ENCODE measurements at regions of chr1 and their contacts with region 1.

Region 1: GRCh38 chr1:181088079-181089016 is at the start of gene IER5:
- DNase-seq: peak; percentile 93 to 95 (median 95)
- H3K4me3 ChIP-seq: peak within 1 kb of the TSS; percentile 68 to 69
- H3K4me3 Mint-ChIP-seq: peak within 1 kb of the TSS; percentile 98 to 100 (median 99)
- H3K27ac ChIP-seq: peak within 1 kb of the TSS; percentile 100
- H3K27ac Mint-ChIP-seq: peak within 1 kb of the TSS; percentile 96 to 99 (median 99)
- H3K4me1 ChIP-seq: peaks cover 40% of the 10 kb centered on the region
- H3K4me1 Mint-ChIP-seq: peaks cover 29 to 63% (median 40%) of the 10 kb centered on the region in 4 donors
- H3K27me3 ChIP-seq: no peaks in the 10 kb centered on the region
- H3K27me3 Mint-ChIP-seq: no peaks in the 10 kb centered on the region
- total RNA-seq, gene IER5: 28.0 to 29.3 TPM

Region 2: DNA sequence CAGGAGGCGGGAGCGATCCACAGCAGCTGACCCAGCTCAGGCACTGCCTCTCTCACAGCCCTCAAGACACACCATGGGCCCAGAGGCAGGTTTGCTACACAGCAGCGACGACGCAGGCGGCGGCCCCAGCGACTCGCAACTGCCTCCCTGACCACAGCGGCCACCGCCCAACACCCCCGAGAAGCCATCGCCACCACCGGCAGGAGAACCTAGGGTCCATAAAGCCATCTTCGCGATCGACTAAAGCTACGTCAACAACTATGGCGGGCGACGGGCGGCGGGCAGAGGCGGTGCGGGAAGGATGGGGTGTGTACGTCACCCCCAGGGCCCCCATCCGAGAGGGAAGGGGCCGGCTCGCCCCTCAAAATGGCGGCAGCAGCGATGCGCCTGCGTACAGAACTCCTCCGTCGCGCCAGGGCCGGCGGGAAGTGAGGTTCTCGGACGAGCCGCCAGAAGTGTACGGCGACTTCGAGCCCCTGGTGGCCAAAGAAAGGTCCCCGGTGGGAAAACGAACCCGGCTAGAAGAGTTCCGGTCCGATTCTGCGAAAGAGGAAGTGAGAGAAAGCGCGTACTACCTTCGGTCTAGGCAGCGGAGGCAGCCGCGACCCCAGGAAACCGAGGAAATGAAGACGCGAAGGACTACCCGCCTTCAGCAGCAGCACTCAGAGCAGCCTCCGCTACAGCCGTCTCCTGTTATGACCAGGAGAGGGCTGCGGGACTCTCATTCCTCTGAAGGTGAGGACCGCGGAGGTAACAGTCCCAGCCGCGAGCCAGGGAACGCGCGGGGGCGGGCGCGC is 1205.9 kb before region 1 on chr1 and contains the start of gene TOR1AIP1:
- CTCF ChIA-PET with region 1: no interaction called
- POLR2A ChIA-PET with region 1: interaction called, 3 read pairs
- intact Hi-C with region 1: loop called (anchors 5 kb)
- DNase-seq: peak; percentile 98 to 99 (median 98)
- H3K4me3 ChIP-seq: peak within 1 kb of the TSS; percentile 80 to 94
- H3K4me3 Mint-ChIP-seq: peak within 1 kb of the TSS; percentile 94 to 99 (median 96)
- H3K27ac ChIP-seq: peak within 1 kb of the TSS; percentile 99
- H3K27ac Mint-ChIP-seq: peak within 1 kb of the TSS; percentile 99 to 100 (median 100)
- H3K4me1 ChIP-seq: peaks cover 53% of the 10 kb centered on the region
- H3K4me1 Mint-ChIP-seq: peaks cover 31 to 77% (median 53%) of the 10 kb centered on the region in 4 donors
- H3K27me3 ChIP-seq: no peaks in the 10 kb centered on the region
- H3K27me3 Mint-ChIP-seq: no peaks in the 10 kb centered on the region
- total RNA-seq, gene TOR1AIP1: 53.8 to 61.0 TPM

Region 3: DNA sequence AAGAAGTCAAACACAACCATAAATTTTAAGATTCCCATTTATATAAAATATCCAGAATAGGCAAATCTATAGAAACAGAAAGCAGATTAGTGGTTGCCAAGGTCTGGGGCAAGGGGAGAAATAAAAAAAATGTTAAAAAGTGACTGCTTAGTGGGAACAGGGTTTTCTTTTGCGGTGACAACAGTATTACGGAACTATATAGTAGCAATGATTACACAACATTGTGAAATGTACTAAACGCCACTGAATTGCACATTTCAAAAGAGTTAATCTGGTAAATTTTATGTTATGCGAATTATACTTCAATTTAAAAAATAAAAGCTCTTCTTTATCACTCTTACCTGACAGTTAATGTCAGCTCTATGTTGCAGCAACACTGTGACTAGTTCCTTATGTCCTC is 691.2 kb before region 1 on chr1:
- CTCF ChIA-PET with region 1: no interaction called
- POLR2A ChIA-PET with region 1: no interaction called
- intact Hi-C with region 1: no loop called
- DNase-seq: no peak
- H3K4me3 ChIP-seq: no peak overlapping the region
- H3K4me3 Mint-ChIP-seq: no peak overlapping the region
- H3K27ac ChIP-seq: no peak overlapping the region
- H3K27ac Mint-ChIP-seq: no peak overlapping the region
- H3K4me1 ChIP-seq: no peaks in the 10 kb centered on the region
- H3K4me1 Mint-ChIP-seq: peaks cover 0 to 11% (median 5%) of the 10 kb centered on the region in 4 donors
- H3K27me3 ChIP-seq: no peaks in the 10 kb centered on the region
- H3K27me3 Mint-ChIP-seq: no peaks in the 10 kb centered on the region

Region 4: GRCh38 chr1:180881806-180882509 is 206.4 kb before region 1 on chr1:
- CTCF ChIA-PET with region 1: no interaction called
- POLR2A ChIA-PET with region 1: no interaction called
- intact Hi-C with region 1: loop called (anchors 1 kb)
- DNase-seq: peak in 1 of 5 donors; percentile 4
- H3K4me3 ChIP-seq: no peak overlapping the region
- H3K4me3 Mint-ChIP-seq: no peak overlapping the region
- H3K27ac ChIP-seq: no peak overlapping the region
- H3K27ac Mint-ChIP-seq: no peak overlapping the region
- H3K4me1 ChIP-seq: no peaks in the 10 kb centered on the region
- H3K4me1 Mint-ChIP-seq: no peaks in the 10 kb centered on the region
- H3K27me3 ChIP-seq: no peaks in the 10 kb centered on the region
- H3K27me3 Mint-ChIP-seq: no peaks in the 10 kb centered on the region

Region 5: DNA sequence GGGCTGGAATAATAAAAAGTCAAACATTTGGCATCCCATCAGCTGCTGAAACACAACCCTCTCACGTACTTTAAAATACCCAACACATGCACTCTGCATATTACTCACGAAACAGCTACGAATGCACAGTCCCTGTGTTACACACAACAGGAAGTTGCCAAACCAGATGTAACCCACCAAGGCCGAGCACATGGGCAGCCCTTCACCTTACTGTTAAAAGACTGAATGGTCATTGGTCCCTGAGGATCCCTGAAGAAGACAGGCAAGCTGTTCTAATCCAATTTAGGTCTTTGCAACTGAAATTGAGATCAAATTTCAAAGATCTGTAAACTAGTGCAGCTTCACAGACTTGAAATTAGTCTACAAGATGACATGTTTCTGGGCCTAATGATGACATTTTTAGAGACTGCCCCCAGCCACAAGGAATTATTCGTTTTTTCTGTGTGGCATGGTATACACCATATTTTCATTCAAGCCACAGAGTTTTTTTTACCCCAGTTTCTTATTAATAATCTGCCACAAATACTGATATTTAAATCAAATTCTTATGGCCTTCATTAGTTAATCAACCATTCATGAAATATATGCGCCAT is 25.4 kb before region 1 on chr1:
- CTCF ChIA-PET with region 1: interaction called, 9 read pairs
- POLR2A ChIA-PET with region 1: interaction called, 24 read pairs
- intact Hi-C with region 1: no loop called
- DNase-seq: peak in 4 of 5 donors; percentile 13 to 27 (median 19)
- H3K4me3 ChIP-seq: peak overlapping the region in 1 of 2 donors; percentile 33
- H3K4me3 Mint-ChIP-seq: peak overlapping the region; percentile 70 to 91 (median 76)
- H3K27ac ChIP-seq: peak overlapping the region; percentile 39
- H3K27ac Mint-ChIP-seq: peak overlapping the region; percentile 27 to 95 (median 87)
- H3K4me1 ChIP-seq: peaks cover 19% of the 10 kb centered on the region
- H3K4me1 Mint-ChIP-seq: peaks cover 18 to 24% (median 21%) of the 10 kb centered on the region in 4 donors
- H3K27me3 ChIP-seq: no peaks in the 10 kb centered on the region
- H3K27me3 Mint-ChIP-seq: no peaks in the 10 kb centered on the region

Region 6: DNA sequence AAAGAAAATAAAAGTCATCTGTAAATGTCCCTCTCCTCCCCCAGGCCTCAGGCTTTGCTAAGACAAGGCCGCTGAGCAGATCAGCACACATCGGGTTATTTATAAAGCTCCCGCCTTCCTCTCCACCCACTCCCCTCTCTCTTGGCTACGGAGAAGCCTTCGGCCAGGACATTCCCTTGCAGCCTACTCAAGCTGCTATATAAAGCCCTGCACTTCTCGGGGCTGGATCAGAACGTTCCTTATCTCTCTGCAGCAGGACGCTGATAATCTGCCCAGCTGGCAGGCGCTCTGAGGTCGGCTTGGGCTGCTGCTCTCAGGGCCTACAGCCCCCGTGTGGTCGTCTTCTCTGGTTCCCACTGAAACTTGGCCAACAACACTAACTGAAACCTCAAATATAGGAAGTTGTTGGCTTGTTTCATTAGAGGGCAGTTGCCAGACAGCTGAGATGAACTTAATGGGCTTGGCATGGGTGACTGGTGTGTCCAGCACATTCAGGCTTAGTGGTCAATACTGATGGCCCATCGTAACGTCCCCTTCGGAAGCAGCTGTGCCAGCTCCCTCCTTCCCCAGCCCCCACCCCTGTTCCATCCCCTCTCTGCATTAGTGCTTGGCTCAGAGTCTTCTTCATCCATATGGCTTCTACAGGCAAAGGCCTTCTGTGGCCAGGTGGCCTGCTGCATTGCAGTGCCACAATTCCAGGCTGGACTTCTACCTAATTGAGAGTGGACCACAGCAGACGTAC is 64.7 kb after region 1 on chr1:
- CTCF ChIA-PET with region 1: interaction called, 311 read pairs
- POLR2A ChIA-PET with region 1: interaction called, 81 read pairs
- intact Hi-C with region 1: no loop called
- DNase-seq: no peak
- H3K4me3 ChIP-seq: no peak overlapping the region
- H3K4me3 Mint-ChIP-seq: no peak overlapping the region
- H3K27ac ChIP-seq: no peak overlapping the region
- H3K27ac Mint-ChIP-seq: peak overlapping the region in 2 of 7 donors; percentile 23 to 62
- H3K4me1 ChIP-seq: peaks cover 56% of the 10 kb centered on the region
- H3K4me1 Mint-ChIP-seq: peaks cover 37 to 61% (median 49%) of the 10 kb centered on the region in 4 donors
- H3K27me3 ChIP-seq: no peaks in the 10 kb centered on the region
- H3K27me3 Mint-ChIP-seq: no peaks in the 10 kb centered on the region

Region 7: GRCh38 chr1:181296180-181296579 is 207.8 kb after region 1 on chr1:
- CTCF ChIA-PET with region 1: no interaction called
- POLR2A ChIA-PET with region 1: no interaction called
- intact Hi-C with region 1: no loop called
- DNase-seq: no peak
- H3K4me3 ChIP-seq: no peak overlapping the region
- H3K4me3 Mint-ChIP-seq: no peak overlapping the region
- H3K27ac ChIP-seq: no peak overlapping the region
- H3K27ac Mint-ChIP-seq: no peak overlapping the region
- H3K4me1 ChIP-seq: no peaks in the 10 kb centered on the region
- H3K4me1 Mint-ChIP-seq: no peaks in the 10 kb centered on the region
- H3K27me3 ChIP-seq: no peaks in the 10 kb centered on the region
- H3K27me3 Mint-ChIP-seq: peaks cover 0 to 8% of the 10 kb centered on the region in 2 donors

Region 8: DNA sequence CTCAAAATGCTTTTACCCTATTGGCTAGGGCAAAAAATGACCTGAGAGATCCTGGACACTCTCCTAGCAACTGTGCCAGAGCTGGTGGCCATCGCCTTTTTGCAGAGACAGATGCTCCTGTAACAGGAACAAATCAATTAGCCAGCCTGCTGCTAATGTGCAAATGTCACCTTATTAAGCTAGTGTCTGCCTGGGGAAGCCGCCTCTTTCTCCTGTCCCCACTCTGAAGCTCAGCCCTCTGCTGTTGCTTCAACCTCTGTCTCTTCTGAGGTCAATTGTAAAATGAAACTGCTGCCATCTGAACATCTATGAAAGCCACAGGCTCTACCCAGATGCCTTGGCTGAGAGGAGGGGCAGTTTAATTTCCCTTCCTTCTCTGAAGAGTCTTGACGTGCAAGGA is 309.5 kb after region 1 on chr1:
- CTCF ChIA-PET with region 1: no interaction called
- POLR2A ChIA-PET with region 1: interaction called, 5 read pairs
- intact Hi-C with region 1: loop called (anchors 5 kb)
- DNase-seq: peak; percentile 41 to 56 (median 50)
- H3K4me3 ChIP-seq: peak overlapping the region; percentile 13 to 25
- H3K4me3 Mint-ChIP-seq: peak overlapping the region; percentile 65 to 86 (median 74)
- H3K27ac ChIP-seq: peak overlapping the region; percentile 37
- H3K27ac Mint-ChIP-seq: peak overlapping the region in 5 of 7 donors; percentile 78 to 97 (median 95)
- H3K4me1 ChIP-seq: peaks cover 64% of the 10 kb centered on the region
- H3K4me1 Mint-ChIP-seq: peaks cover 9 to 35% (median 29%) of the 10 kb centered on the region in 4 donors
- H3K27me3 ChIP-seq: no peaks in the 10 kb centered on the region
- H3K27me3 Mint-ChIP-seq: no peaks in the 10 kb centered on the region

Measured in CD4-positive, alpha-beta memory T cell (primary cell).